Activated CD4-positive, alpha-beta T cell treated with anti-CD3 and anti-CD28 coated beads for 36 hours (primary cell): ENCODE measurements at regions of chr12 and their contacts with region 1.

Region 1: DNA sequence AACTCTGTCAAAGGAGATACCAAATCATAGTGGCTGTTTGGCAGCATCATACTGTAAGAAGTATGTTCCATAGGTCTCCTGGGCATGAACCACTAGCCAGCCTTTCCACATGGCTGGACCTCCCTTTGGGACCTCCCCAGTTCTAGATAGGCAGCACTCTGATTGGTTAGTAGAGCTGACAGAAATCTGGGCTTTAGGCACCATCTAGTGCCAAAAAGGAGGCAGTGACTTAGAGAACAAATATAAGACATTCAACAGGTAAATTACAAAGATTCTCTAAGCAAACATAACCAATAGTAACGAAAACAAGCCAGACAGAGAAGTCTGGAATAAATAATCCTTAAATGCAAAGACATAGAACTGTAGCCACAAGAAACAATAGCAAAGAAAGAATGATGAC is 148.0 kb upstream of the PDE3A start:
- DNase-seq: no peak
- ATAC-seq: no peak
- H3K4me3 Mint-ChIP-seq: no peak overlapping the region
- H3K27ac Mint-ChIP-seq: no peak overlapping the region
- H3K4me1 Mint-ChIP-seq: no peaks in the 10 kb centered on the region
- H3K27me3 Mint-ChIP-seq: no peaks in the 10 kb centered on the region

Region 2: DNA sequence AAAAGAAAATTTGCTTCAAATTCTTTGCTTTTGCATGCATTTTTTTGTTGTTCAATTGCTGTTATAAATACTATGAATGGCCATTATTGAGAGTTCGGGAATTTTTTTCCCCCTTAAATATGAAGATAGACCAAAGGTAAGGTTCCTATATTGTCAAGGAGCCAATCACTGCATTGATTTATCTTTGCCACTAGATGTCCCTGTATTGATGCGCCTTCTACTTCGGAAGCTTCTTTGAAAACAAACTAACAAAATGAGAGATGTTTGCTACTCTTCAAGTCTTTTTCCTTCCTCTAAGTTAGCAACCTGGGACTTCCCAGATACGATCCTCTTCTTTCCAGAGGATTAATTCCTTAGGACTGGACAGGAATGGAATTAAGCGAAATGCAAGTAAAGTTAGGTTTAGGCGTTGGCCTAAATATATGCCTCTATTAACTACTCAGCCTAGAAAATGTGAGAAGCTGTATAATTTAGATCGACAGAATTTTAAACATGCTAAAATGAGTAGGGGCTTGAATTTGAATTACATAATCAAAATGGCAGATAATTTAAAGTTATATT is 462.9 kb before region 1 on chr12:
- CTCF ChIA-PET with region 1: no interaction called
- POLR2A ChIA-PET with region 1: no interaction called
- intact Hi-C with region 1: loop called in 1 of 2 experiments (anchors 10 kb)
- DNase-seq: no peak
- ATAC-seq: no peak
- H3K4me3 Mint-ChIP-seq: no peak overlapping the region
- H3K27ac Mint-ChIP-seq: no peak overlapping the region
- H3K4me1 Mint-ChIP-seq: peaks cover 2% of the 10 kb centered on the region
- H3K27me3 Mint-ChIP-seq: no peaks in the 10 kb centered on the region

Region 3: GRCh38 chr12:20205852-20206251 is 14.5 kb before region 1 on chr12:
- CTCF ChIA-PET with region 1: no interaction called
- POLR2A ChIA-PET with region 1: no interaction called
- intact Hi-C with region 1: no loop called
- DNase-seq: no peak
- ATAC-seq: no peak
- H3K4me3 Mint-ChIP-seq: no peak overlapping the region
- H3K27ac Mint-ChIP-seq: no peak overlapping the region
- H3K4me1 Mint-ChIP-seq: no peaks in the 10 kb centered on the region
- H3K27me3 Mint-ChIP-seq: no peaks in the 10 kb centered on the region

Region 4: DNA sequence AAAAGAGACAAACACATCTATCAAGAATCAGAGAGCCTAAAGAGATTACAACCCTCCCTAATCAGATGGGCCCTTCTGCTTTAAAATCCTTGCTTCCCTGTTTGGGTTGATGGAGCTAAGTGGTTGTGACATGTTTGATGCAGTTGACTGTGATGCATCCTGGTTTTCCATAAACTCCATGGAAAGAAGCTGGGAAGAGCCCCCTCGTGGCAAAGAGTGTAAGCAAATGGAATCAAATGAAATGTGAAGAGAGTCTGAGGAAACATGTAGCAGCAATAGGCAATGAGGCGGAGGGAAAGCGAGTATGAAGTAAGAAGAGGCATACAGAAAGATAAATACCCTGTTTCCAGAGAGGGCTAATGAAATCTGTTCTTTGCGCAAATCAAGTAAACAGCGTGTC is 404.4 kb after region 1 on chr12:
- CTCF ChIA-PET with region 1: no interaction called
- POLR2A ChIA-PET with region 1: no interaction called
- intact Hi-C with region 1: no loop called
- DNase-seq: no peak
- ATAC-seq: no peak
- H3K4me3 Mint-ChIP-seq: no peak overlapping the region
- H3K27ac Mint-ChIP-seq: no peak overlapping the region
- H3K4me1 Mint-ChIP-seq: no peaks in the 10 kb centered on the region
- H3K27me3 Mint-ChIP-seq: no peaks in the 10 kb centered on the region